ENCODE measurements at regions of chr7 and their contacts with region 1.

Region 1: DNA sequence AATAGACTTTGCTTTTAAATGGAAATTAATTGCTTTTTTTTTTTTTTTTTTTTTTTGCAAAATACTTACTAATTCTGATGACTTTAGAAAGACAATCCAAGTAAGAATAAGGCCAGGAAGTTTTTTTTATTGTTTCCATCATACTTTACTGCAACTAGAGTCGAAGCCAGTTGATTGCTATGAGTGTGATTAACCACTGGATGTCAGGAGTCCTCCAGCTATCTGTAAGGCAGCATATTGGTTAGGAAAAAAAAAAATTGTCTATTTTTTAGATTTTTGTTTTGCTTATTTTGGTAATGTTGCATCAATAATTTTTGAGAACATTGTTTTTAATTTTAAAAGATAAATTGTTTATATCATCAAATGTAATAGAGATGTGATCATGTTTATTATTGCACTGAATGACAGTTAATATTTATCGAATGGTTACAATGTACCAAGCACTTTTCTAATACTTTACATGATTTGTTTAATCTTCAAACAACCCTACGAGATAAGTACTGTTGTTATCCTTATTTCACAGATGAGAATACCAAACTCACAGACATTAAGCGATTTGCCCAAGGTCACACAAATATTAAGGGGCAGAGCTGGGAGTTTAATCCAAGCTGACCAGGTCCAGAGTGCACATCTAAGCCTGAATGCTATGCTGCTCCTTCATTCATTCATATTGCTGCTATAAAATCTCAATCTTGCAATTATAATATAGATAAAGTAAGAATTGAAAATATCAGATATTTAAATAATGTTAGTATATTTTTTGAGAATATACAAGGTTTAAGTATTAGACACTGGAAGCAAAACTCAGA is 19.9 kb upstream of the LMOD2 start:
- DNase-seq: no peak
- ATAC-seq: peak; percentile 59

Region 2: DNA sequence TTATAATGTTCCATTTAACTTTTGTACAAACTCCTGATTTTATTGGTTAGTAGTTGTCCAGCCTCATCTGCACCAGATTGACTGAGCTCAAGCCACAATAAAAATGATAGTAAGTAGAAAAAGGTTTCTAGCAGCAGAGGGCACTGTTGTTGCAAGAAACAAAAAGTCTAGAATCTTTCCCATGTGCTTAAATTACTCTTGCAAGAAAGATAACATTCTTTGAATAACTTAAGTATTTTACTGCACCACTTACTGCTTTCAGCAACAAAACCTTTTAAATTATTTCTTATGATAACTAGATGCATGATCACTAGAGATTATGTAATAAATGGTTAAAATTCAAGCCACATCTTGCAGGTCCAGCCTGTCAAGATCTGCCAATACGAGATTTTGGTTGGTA is 46.9 kb after region 1 on chr7:
- intact Hi-C with region 1: loop called (anchors 5 kb)
- DNase-seq: no peak
- ATAC-seq: peak; percentile 50

Measured in left ventricle myocardium superior (tissue), 1 donor.